ENCODE measurements at regions of chr22 and their contacts with region 1.

Region 1: DNA sequence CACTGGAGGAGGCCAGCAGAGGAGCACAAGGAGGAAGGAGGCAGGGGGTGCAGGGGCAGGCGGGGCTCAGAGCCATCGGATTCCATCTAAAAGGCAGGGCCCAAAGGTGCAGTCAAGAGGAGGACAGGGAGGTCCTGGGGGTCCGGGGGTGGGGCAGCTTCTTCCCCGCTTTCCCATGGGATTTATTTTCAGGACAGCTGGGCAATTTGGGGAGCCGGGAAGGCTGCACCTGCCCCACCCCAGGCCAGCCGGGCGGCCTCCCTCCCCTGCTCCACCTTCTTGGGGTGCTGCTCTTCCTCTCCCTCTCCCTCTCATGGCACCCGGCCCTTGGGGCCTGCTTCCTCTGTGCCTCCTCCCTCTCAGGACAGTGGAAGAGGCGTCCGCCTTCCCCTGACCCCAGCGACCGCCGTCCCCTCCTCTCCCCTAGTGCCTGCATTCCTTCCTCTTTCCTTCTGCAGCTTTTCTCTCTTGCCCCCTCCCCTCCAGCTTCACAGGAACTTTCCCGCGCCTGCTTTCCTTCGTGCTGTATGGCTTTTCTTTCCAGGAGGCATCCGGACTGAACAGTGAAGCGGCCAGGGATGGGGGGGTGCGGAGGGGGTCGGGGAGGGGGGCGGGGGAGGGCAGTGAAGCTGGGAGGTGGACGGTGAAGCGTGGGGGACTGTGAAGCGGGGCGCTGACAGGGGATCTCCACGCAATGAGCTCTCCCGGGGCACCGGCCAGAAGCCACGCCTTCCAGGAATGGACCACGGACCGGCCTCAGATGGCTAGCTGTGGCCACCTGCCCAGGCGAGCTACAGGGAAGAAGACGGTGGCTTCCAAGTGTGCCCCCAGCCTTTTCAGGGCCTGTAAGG is 26.9 kb downstream of the APOBEC3H start:
- DNase-seq: no peak
- H3K4me3 ChIP-seq: no peak overlapping the region
- H3K27ac ChIP-seq: no peak overlapping the region
- H3K4me1 ChIP-seq: peaks cover 0 to 5% (median 0%) of the 10 kb centered on the region in 3 donors
- H3K27me3 ChIP-seq: peaks cover 0 to 8% (median 0%) of the 10 kb centered on the region in 4 donors
- CTCF ChIP-seq: no peak
- POLR2A ChIP-seq: no peak

Region 2: GRCh38 chr22:39003165-39003638 is 120.8 kb before region 1 on chr22:
- intact Hi-C with region 1: loop called (anchors 5 kb)
- DNase-seq: no peak
- H3K4me3 ChIP-seq: no peak overlapping the region
- H3K27ac ChIP-seq: no peak overlapping the region
- H3K4me1 ChIP-seq: peaks cover 0 to 9% (median 3%) of the 10 kb centered on the region in 3 donors
- H3K27me3 ChIP-seq: peaks cover 0 to 12% (median 0%) of the 10 kb centered on the region in 4 donors
- CTCF ChIP-seq: peak; percentile 67 to 79 (median 74)
- POLR2A ChIP-seq: no peak

Measured in esophagus squamous epithelium (tissue), 5 donors.